Heart right ventricle (tissue), 16 donors: ENCODE measurements at regions of chr5 and their contacts with region 1.

Region 1: DNA sequence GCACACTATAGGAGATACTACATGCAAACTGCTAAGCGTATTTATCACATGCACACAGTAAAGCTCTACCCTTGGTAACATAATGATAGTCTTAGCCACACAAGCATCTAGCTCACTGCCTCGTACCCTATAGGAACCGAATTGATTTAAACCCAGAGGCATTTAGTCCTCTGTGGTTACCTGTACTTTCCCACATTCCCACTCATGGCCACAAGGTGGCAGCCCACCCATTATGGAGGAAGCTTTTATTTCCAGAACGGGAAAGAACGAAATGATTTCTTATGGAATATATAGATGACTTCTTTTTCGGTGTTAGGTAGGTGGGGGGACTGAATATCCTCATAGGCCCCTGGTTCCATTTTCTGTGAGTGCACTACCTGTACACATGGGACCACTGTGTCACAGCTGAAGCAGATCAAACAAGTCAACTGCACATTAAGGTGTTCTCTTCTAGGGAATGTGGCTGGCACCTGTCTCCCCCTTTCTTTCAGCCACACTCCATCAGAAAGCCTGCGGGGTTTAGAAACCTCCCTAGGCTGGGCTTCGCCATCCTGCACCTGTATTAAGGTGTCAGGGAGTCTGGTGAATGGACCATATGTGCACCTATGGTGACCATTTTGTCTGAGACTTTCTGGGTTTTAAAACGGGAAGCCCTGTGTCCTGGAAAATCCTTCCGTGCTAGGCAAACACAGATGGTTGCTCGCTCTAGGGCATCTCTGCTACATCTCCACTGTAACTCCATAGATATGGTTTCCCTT is 313.2 kb downstream of the SLIT3 start:
- DNase-seq: peak; percentile 64 to 68
- ATAC-seq: peak in 7 of 8 donors; percentile 39 to 70 (median 52)
- H3K4me3 ChIP-seq: no peak overlapping the region
- H3K27ac ChIP-seq: no peak overlapping the region
- H3K4me1 ChIP-seq: peaks cover 0 to 10% (median 4%) of the 10 kb centered on the region in 9 donors
- H3K27me3 ChIP-seq: peaks cover 0 to 28% (median 11%) of the 10 kb centered on the region in 7 donors
- CTCF ChIP-seq: peak; percentile 69 to 93 (median 89)

Region 2: GRCh38 chr5:168950241-168950951 is 37.3 kb before region 1 on chr5:
- intact Hi-C with region 1: no loop called
- DNase-seq: no peak
- ATAC-seq: no peak
- H3K4me3 ChIP-seq: no peak overlapping the region
- H3K27ac ChIP-seq: no peak overlapping the region
- H3K4me1 ChIP-seq: no peaks in the 10 kb centered on the region
- H3K27me3 ChIP-seq: no peaks in the 10 kb centered on the region
- CTCF ChIP-seq: no peak

Region 3: DNA sequence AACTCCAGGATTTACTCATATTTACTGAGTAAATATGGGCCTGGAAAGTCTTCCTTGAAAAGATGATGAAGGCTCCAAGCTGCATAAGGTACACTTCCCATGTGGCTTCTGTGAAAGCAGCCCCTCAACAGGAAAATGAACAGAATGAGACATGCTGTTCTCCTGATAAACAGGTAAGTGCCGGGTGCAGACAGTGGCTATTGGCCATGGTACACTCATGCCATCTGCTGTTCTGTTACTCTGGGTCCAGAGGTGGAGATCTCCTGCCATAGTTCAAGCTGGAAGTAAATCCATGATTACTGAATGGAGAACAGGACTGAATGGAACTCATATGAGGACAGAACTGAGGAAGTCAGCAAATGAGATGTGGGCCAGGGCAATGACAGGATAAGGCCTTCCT is 209.6 kb after region 1 on chr5:
- intact Hi-C with region 1: loop called in 9 of 10 experiments (anchors 1 to 5 kb)
- DNase-seq: peak in 1 of 2 donors; percentile 20
- ATAC-seq: peak; percentile 49 to 85 (median 67)
- H3K4me3 ChIP-seq: no peak overlapping the region
- H3K27ac ChIP-seq: no peak overlapping the region
- H3K4me1 ChIP-seq: peaks cover 0 to 10% (median 0%) of the 10 kb centered on the region in 9 donors
- H3K27me3 ChIP-seq: peaks cover 0 to 5% (median 0%) of the 10 kb centered on the region in 7 donors
- CTCF ChIP-seq: peak; percentile 12 to 61 (median 49)

Region 4: GRCh38 chr5:169307646-169308045 is 319.9 kb after region 1 on chr5:
- intact Hi-C with region 1: loop called (anchors 1 to 10 kb)
- DNase-seq: no peak
- ATAC-seq: no peak
- H3K4me3 ChIP-seq: no peak overlapping the region
- H3K27ac ChIP-seq: no peak overlapping the region
- H3K4me1 ChIP-seq: peaks cover 0 to under 1% (median 0%) of the 10 kb centered on the region in 9 donors
- H3K27me3 ChIP-seq: peaks cover 0 to 60% (median 35%) of the 10 kb centered on the region in 7 donors
- CTCF ChIP-seq: no peak

Region 5: GRCh38 chr5:169567079-169567478 is 579.4 kb after region 1 on chr5:
- intact Hi-C with region 1: loop called in 3 of 10 experiments (anchors 10 kb)
- DNase-seq: no peak
- ATAC-seq: no peak
- H3K4me3 ChIP-seq: no peak overlapping the region
- H3K27ac ChIP-seq: no peak overlapping the region
- H3K4me1 ChIP-seq: no peaks in the 10 kb centered on the region
- H3K27me3 ChIP-seq: peaks cover 0 to 65% (median 15%) of the 10 kb centered on the region in 7 donors
- CTCF ChIP-seq: no peak

Region 6: DNA sequence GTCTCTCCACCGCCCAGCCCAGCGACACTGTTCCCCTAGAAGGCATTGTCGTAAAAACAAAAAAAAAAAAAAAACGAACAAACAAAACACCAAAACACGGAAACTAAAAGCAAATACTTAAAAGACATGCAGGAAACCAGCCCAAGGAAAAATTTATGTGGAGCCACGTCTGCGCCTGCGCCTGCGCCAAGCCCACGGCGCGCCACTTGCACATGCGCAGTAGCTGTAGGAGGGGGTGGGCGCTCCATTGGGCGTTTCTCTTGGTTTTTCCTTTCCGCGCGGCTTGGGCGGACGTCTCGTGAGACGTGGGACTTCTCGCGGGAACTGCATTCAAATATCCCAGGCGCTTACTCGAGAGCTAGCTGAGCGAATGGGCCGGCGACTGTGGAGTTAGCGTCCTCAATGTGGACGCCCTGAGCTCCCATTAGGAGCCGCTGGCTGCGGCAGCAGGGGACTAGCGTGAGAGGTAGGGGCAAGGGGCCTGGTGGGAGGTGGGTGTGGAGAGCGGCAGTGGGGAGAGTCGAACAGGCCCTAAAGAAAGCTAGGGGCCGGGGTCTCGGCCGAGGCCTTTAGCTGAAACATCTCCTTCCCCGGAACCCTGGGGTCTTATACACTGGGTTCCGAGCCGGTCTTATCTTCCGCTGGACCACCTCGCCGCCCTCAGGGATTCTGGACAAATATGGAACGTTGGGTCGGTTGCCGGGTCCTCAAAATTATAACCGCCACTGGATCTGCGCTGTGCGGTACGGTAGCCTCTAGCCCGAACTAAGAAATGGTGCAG is 595.9 kb after region 1 on chr5 and contains the start of gene SPDL1:
- intact Hi-C with region 1: loop called in 6 of 10 experiments (anchors 1 to 10 kb)
- DNase-seq: peak; percentile 95 to 96
- ATAC-seq: peak; percentile 95 to 99 (median 98)
- H3K4me3 ChIP-seq: peak within 1 kb of the TSS; percentile 62 to 91 (median 82)
- H3K27ac ChIP-seq: peak within 1 kb of the TSS in 9 of 10 donors; percentile 48 to 84 (median 73)
- H3K4me1 ChIP-seq: peaks cover 0 to 17% (median 11%) of the 10 kb centered on the region in 9 donors
- H3K27me3 ChIP-seq: peaks cover 0 to 10% (median 0%) of the 10 kb centered on the region in 7 donors
- CTCF ChIP-seq: no peak
- total RNA-seq, gene SPDL1: 2.9 to 5.7 (median 4.2) TPM